GM12878 (cell line): ENCODE measurements at regions of chr12 and their contacts with region 1.

Region 1: GRCh38 chr12:16349131-16349460 is 1.7 kb downstream of the MGST1 start:
- DNase-seq: peak; percentile 7
- ATAC-seq: peak; percentile 39
- H3K4me3 ChIP-seq: no peak overlapping the region
- H3K27ac ChIP-seq: no peak overlapping the region
- H3K4me1 ChIP-seq: no peaks in the 10 kb centered on the region
- H3K27me3 ChIP-seq: no peaks in the 10 kb centered on the region
- CTCF ChIP-seq: no peak
- EP300 ChIP-seq: no peak
- POLR2A ChIP-seq: no peak
- RAD21 ChIP-seq: no peak

Region 2: GRCh38 chr12:15808652-15809051 is 540.4 kb before region 1 on chr12:
- CTCF ChIA-PET with region 1: no interaction called
- POLR2A ChIA-PET with region 1: no interaction called
- RAD21 ChIA-PET with region 1: no interaction called
- SMC1A ChIA-PET with region 1: no interaction called
- in situ Hi-C with region 1: no loop called
- intact Hi-C with region 1: no loop called
- DNase-seq: no peak
- ATAC-seq: no peak
- H3K4me3 ChIP-seq: no peak overlapping the region
- H3K27ac ChIP-seq: no peak overlapping the region
- H3K4me1 ChIP-seq: no peaks in the 10 kb centered on the region
- H3K27me3 ChIP-seq: no peaks in the 10 kb centered on the region
- CTCF ChIP-seq: no peak
- EP300 ChIP-seq: no peak
- POLR2A ChIP-seq: no peak
- RAD21 ChIP-seq: no peak

Region 3: DNA sequence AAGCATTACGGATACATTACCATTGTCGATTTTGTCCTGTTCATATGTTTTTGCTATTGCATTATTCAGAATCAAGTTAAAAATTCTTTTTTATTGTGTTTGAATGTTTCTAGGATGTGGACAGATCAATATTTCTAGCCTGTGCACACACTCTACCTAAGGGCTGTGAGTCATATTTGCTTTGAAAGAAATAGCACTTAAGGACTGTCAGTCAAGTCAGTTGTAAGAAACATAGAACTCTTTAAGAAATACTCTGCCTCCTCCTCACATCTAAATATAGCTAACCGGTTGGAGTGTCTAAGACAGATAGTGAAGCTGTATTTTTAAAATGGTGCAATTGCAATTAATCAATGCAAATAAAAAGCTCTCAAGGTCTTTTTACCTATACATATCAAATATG is 19.5 kb before region 1 on chr12:
- CTCF ChIA-PET with region 1: no interaction called
- POLR2A ChIA-PET with region 1: no interaction called
- RAD21 ChIA-PET with region 1: no interaction called
- SMC1A ChIA-PET with region 1: interaction called, 12 read pairs
- in situ Hi-C with region 1: no loop called
- intact Hi-C with region 1: no loop called
- DNase-seq: no peak
- ATAC-seq: no peak
- H3K4me3 ChIP-seq: no peak overlapping the region
- H3K27ac ChIP-seq: no peak overlapping the region
- H3K4me1 ChIP-seq: no peaks in the 10 kb centered on the region
- H3K27me3 ChIP-seq: no peaks in the 10 kb centered on the region
- CTCF ChIP-seq: no peak
- EP300 ChIP-seq: no peak
- POLR2A ChIP-seq: no peak
- RAD21 ChIP-seq: no peak

Region 4: DNA sequence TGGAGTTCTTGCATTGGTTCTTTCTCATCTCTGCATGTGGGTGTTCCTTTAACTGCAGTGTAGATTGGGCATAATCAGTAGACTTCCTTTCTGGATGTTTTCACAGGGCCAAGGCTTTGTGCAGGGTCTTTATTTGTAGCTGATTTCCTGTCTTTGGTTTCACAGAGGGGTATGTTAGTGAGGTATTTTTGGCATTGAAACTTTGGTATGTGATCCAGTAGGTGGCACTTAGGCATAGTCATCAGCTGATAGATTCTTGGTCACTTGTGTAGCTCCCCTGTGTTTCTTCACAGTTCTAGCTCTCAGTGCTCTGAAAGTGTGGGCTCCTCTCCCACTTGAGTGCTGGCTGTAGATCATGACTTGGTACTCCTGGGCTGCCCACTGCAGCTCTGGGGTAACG is 309.6 kb after region 1 on chr12:
- CTCF ChIA-PET with region 1: no interaction called
- POLR2A ChIA-PET with region 1: no interaction called
- RAD21 ChIA-PET with region 1: no interaction called
- SMC1A ChIA-PET with region 1: no interaction called
- in situ Hi-C with region 1: no loop called
- intact Hi-C with region 1: no loop called
- DNase-seq: no peak
- ATAC-seq: no peak
- H3K4me3 ChIP-seq: no peak overlapping the region
- H3K27ac ChIP-seq: no peak overlapping the region
- H3K4me1 ChIP-seq: no peaks in the 10 kb centered on the region
- H3K27me3 ChIP-seq: no peaks in the 10 kb centered on the region
- CTCF ChIP-seq: no peak
- EP300 ChIP-seq: no peak
- POLR2A ChIP-seq: no peak
- RAD21 ChIP-seq: no peak